ENCODE measurements at regions of chr10 and their contacts with region 1.

Region 1: DNA sequence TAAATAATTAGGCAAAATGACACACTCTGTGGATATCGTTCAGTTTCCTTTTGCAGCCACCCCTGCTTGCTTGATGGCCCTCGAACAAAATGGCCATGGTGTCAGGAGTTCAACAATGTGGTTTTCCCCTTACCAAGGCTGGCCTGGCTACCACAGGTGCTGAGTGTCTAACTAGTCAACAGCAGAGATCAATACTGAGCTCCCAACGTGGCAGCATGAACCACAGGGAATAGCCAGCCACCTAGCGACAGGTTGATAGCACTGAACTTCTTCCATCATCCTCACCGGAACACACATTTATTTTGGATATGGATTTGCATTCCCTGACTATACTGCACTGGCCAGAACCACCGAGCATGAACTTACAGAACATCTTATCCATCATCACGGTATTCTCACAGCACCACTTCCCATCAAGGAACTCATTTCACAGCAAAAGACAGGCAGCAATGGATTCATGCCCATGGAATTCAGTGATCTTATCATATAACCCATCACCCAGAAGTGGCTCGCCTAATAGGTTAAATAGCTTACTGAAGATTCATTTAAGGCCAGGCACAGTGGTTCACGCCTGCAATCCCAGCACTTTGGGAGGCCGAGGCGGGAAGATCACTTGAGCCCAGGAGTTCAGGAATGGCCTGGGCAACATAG is 6.3 kb downstream of the C10orf67 start:
- DNase-seq: peak; percentile 64 to 94
- H3K4me3 ChIP-seq: no peak overlapping the region
- H3K27ac ChIP-seq: peak overlapping the region; percentile 85
- H3K4me1 ChIP-seq: peaks cover 64% of the 10 kb centered on the region
- H3K27me3 ChIP-seq: no peaks in the 10 kb centered on the region
- CTCF ChIP-seq: peak; percentile 44

Region 2: DNA sequence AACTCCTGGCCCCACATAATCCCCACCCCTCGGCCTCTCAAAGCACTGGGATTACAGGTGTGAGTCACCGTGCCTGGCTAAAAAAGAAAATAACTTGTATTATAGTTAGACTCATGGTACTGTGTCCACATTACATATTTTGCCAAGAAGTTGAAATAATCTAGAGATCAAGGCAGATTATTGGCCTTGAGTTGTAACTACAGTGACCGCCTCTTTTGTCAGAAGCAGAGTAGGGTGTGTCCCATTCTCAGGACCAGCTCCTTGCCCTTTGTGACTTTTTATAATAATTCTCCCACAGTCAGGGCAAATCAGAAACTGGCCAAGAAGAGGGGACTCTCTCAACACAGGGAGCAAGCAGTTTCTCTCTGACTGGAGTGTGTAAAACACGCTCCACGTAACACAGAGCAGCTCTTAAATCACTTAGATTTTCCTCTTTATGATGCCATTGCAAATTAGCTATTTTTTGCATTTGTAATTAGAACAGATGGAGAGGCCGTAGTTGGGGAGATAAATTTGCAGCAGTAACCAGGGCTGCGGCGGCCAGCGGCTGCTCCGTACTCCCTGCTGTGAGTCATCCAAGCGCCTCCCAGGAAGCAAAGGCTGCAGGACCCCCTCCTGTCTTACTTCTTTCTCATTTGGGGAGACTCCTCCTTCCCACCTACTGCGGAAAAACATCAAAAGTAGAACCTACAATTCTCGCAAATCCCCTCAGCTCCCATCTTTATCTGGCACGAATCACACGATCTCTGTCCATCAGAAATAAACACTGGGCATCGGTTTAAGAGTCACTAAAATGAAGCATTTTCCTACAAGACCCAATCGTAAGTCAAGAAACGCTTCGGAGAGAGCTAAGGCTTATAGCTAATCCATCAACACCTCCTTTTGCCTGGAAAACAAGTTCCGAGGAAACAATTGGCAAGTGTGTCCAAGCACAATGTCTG is 275.0 kb before region 1 on chr10:
- CTCF ChIA-PET with region 1: no interaction called
- POLR2A ChIA-PET with region 1: no interaction called
- intact Hi-C with region 1: no loop called
- DNase-seq: no peak
- H3K4me3 ChIP-seq: no peak overlapping the region
- H3K27ac ChIP-seq: no peak overlapping the region
- H3K4me1 ChIP-seq: no peaks in the 10 kb centered on the region
- H3K27me3 ChIP-seq: no peaks in the 10 kb centered on the region
- CTCF ChIP-seq: no peak

Region 3: DNA sequence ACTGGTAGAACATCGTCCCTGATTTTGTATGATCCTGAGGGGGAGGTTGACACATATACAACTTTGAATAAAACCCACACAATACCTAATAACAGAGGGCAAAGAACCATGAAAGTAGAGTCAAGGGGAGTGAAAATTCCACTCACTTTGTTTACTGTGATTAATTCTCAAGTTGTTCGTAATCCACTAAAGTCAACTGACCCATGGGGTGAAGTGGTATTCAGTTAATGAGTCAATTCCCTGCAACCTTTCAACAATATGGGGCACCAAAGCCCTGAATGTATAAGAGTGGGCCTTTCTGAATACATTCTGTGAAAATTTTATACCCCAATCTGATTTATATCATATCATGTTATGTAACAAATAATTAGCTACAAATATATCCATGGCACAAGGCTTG is 45.3 kb after region 1 on chr10:
- CTCF ChIA-PET with region 1: interaction called, 3 read pairs
- POLR2A ChIA-PET with region 1: no interaction called
- intact Hi-C with region 1: loop called (anchors 2 kb)
- DNase-seq: no peak
- H3K4me3 ChIP-seq: no peak overlapping the region
- H3K27ac ChIP-seq: peak overlapping the region; percentile 71
- H3K4me1 ChIP-seq: peaks cover 16% of the 10 kb centered on the region; the same call in 1 of the 2 replicates
- H3K27me3 ChIP-seq: no peaks in the 10 kb centered on the region
- CTCF ChIP-seq: no peak

Region 4: DNA sequence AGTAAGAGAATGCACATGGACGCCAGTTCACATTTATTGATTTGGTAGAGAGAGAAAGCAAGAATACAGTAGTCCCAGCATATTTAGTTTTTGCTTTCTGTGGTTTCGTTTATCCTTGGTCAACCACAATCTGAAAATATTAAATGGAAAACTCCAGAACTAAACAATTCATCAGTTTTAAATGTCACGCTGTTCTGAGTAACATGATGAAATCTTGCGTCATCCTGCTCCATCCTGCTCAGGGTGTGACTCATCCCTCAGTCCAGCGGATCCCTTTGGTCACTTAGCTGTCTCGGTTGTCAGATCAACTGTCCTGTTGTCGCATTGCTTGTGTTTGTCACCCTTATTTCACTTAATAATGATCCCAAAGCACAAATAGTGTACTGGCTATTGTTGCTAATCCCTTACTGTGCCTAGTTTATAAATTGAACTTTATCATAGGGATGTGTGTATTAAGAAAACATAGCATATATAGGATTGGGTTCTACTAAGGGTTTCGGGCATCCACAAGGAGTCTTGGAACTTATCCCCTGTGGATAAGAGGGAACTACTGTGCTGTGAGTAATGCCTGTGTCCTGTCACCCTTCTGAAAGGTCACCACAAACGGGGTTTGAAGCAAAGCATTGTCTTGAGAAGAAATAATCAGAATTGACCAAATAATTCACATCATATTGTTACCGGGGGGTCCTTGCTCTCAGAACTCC is 174.2 kb after region 1 on chr10:
- CTCF ChIA-PET with region 1: no interaction called
- POLR2A ChIA-PET with region 1: no interaction called
- intact Hi-C with region 1: loop called (anchors 5 kb)
- DNase-seq: peak; percentile 20 to 72
- H3K4me3 ChIP-seq: no peak overlapping the region
- H3K27ac ChIP-seq: peak overlapping the region; percentile 92
- H3K4me1 ChIP-seq: peaks cover 33% of the 10 kb centered on the region
- H3K27me3 ChIP-seq: no peaks in the 10 kb centered on the region
- CTCF ChIP-seq: no peak